Activated CD4-positive, alpha-beta T cell treated with anti-CD3 and anti-CD28 coated beads, Interleukin-2, amount 10 ng/mL, durations not matched to agents 24 days and 14 days (primary cell): ENCODE measurements at regions of chr17 and their contacts with region 1.

Region 1: GRCh38 chr17:48543107-48543853 is 1.6 kb downstream of the HOXB2 start:
- DNase-seq: peak; percentile 91
- H3K4me3 Mint-ChIP-seq: peak overlapping the region; percentile 95
- H3K27ac Mint-ChIP-seq: peak overlapping the region; percentile 97
- H3K4me1 Mint-ChIP-seq: peaks cover 47% of the 10 kb centered on the region
- H3K27me3 Mint-ChIP-seq: peaks cover 2% of the 10 kb centered on the region

Region 2: DNA sequence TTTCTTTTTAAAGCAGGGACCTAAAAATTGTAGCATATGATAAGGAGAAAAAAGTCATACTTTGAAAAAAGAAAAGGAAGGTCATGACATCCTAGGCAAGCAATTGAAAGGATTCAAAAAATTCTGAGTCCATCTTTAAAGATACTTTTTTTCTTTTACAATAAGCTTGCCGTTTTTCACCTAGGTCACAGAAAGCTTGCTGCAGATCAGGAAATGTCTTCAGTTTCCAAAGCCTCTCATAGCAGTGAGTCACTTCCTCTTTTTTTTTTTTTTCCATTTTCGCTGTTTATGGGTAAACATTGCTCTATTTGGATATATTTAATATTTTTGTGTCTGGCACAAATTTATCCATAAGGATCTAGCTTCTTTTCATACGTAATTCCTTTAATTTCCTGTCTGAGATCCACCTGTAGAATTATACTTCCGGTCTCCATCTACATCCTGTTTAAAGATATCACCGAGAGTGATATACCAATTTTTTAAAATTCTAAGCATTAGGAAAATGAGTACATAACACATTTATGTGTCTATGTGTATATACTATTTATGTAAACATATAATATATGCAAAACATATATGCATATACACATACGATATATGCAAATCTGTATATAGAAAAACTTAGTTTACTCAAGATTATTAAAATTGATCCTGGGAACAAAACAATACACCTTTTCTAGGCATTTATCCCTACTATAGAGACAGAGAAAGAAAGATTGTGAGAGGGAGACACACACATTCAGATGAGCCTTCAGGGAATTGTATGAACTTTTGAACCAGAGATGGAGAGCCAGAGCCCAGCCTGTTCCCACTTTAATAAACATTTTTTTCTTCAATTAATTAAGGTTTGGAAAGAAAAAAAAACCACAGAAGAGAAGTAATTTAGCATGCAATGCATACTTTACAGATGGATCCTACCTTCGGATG is 247.7 kb before region 1 on chr17:
- intact Hi-C with region 1: no loop called
- DNase-seq: peak; percentile 68
- H3K4me3 Mint-ChIP-seq: peak overlapping the region; percentile 76
- H3K27ac Mint-ChIP-seq: peak overlapping the region; percentile 90
- H3K4me1 Mint-ChIP-seq: peaks cover 50% of the 10 kb centered on the region
- H3K27me3 Mint-ChIP-seq: no peaks in the 10 kb centered on the region

Region 3: GRCh38 chr17:48429638-48430586 is 113.4 kb before region 1 on chr17 and contains the start of gene SKAP1:
- intact Hi-C with region 1: loop called (anchors 5 kb)
- DNase-seq: peak; percentile 93
- H3K4me3 Mint-ChIP-seq: peak within 1 kb of the TSS; percentile 99
- H3K27ac Mint-ChIP-seq: peak within 1 kb of the TSS; percentile 99
- H3K4me1 Mint-ChIP-seq: peaks cover 64% of the 10 kb centered on the region
- H3K27me3 Mint-ChIP-seq: no peaks in the 10 kb centered on the region
- total RNA-seq, gene SKAP1: 59.3 and 63.1 TPM in 2 replicates

Region 4: GRCh38 chr17:48457080-48457836 is 86.0 kb before region 1 on chr17:
- intact Hi-C with region 1: no loop called
- DNase-seq: peak; percentile 93
- H3K4me3 Mint-ChIP-seq: peak overlapping the region; percentile 53
- H3K27ac Mint-ChIP-seq: peak overlapping the region; percentile 17
- H3K4me1 Mint-ChIP-seq: peaks cover 53% of the 10 kb centered on the region
- H3K27me3 Mint-ChIP-seq: no peaks in the 10 kb centered on the region

Region 5: DNA sequence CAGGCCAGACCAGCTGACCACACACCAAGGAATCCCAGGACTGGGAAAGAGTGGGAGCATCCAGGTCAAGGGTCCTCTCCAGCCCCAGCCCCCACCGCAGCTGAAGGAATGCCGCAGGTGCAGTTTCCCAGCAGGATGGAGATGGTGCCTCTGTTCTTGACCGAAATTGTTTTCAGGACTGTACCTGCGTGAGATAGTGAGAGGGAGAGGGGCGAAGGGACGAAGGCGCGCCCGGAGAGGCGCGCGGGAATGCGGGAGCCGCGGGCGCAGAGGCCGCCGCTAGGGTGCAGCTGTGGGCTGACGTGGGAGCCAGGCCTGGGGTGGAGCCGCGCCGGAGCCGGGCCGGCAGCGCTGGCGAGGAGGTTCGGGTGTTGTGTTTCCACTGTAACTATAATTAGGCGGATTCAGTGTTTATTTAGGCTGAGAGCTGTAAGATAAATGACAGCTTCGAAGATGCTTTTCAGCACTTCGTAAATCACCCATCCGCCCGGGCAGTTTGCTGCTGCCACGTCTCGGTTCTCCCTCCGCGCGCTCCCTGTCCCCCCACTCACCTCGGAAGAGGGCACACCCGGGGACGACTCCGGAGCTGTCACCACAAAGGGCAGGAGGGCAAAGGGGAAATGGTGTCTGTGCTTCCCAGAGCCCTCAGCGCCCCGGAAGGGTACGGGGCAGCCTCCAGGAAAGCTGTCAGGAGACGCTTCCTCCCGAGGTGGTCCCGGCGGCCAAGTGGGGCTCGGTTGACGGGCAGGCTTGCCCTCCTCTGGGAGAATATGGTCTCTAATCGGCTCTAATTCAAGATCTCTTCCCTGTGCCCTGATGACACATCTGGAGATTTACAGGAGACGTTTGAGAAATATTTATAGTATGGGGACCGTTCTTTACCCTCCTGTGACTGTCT is 50.6 kb before region 1 on chr17:
- intact Hi-C with region 1: loop called (anchors 2 kb)
- DNase-seq: peak; percentile 92
- H3K4me3 Mint-ChIP-seq: peak overlapping the region; percentile 69
- H3K27ac Mint-ChIP-seq: peak overlapping the region; percentile 88
- H3K4me1 Mint-ChIP-seq: peaks cover 36% of the 10 kb centered on the region
- H3K27me3 Mint-ChIP-seq: peaks cover 22% of the 10 kb centered on the region

Region 6: GRCh38 chr17:48505787-48506645 is 37.3 kb before region 1 on chr17:
- intact Hi-C with region 1: loop called (anchors 2 kb)
- DNase-seq: peak; percentile 91
- H3K4me3 Mint-ChIP-seq: peak overlapping the region; percentile 62
- H3K27ac Mint-ChIP-seq: peak overlapping the region; percentile 84
- H3K4me1 Mint-ChIP-seq: peaks cover 40% of the 10 kb centered on the region
- H3K27me3 Mint-ChIP-seq: peaks cover 11% of the 10 kb centered on the region

Region 7: DNA sequence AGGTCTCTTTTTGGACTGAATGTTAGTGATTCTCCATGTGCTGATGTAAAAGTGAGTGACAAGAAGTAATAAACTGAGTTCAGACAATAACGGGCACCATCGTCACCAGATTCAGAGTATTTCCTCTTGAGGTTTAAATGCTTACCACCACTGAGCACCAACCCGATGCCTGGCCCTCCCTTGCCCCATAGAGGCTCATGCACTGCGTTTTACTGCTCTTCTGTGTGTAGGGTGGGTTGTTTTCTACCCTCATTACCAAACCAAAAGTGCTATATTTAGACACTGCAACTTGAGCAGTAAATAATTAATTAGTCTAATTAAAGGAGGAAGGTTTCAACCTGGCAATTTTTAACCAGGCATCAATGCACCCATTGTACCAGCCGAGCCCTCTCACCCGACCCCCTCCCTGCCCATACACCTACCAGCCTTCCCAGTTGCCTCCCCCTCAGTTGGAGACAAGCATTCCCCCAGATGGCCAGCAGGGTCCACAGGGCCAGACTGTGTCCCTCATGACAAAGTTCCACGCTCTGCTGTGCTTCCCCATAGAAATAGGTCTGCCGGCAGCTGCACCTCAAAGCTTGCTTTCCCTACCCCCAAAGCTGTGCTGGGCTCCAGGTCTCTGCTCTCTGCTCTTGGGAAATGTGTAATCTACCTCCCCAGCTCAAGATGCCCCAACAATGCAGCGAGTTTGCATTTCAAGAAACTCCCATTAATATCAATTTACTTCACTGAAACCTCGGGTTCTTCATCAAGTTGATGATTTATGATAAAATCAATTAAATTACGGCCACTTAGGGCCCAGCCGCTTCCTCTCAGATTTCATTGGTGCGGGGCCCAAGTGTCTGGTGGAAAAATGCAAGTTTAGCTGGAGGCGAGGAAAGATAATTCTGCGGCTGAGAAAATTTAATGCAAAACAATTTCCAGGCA is 18.9 kb after region 1 on chr17:
- intact Hi-C with region 1: no loop called
- DNase-seq: no peak
- H3K4me3 Mint-ChIP-seq: no peak overlapping the region
- H3K27ac Mint-ChIP-seq: no peak overlapping the region
- H3K4me1 Mint-ChIP-seq: peaks cover 14% of the 10 kb centered on the region
- H3K27me3 Mint-ChIP-seq: peaks cover 26% of the 10 kb centered on the region

Region 8: GRCh38 chr17:48577946-48578615 is 34.8 kb after region 1 on chr17 and contains the start of gene HOXB4:
- intact Hi-C with region 1: loop called (anchors 2 kb)
- DNase-seq: peak; percentile 93
- H3K4me3 Mint-ChIP-seq: peak within 1 kb of the TSS; percentile 92
- H3K27ac Mint-ChIP-seq: peak within 1 kb of the TSS; percentile 86
- H3K4me1 Mint-ChIP-seq: peaks cover 60% of the 10 kb centered on the region
- H3K27me3 Mint-ChIP-seq: peaks cover 38% of the 10 kb centered on the region
- total RNA-seq, gene HOXB4: 3.1 and 3.6 TPM in 2 replicates